Activated naive CD4-positive, alpha-beta T cell treated with anti-CD3 and anti-CD28 coated beads for 36 hours (primary cell): ENCODE measurements at regions of chr5 and their contacts with region 1.

Region 1: DNA sequence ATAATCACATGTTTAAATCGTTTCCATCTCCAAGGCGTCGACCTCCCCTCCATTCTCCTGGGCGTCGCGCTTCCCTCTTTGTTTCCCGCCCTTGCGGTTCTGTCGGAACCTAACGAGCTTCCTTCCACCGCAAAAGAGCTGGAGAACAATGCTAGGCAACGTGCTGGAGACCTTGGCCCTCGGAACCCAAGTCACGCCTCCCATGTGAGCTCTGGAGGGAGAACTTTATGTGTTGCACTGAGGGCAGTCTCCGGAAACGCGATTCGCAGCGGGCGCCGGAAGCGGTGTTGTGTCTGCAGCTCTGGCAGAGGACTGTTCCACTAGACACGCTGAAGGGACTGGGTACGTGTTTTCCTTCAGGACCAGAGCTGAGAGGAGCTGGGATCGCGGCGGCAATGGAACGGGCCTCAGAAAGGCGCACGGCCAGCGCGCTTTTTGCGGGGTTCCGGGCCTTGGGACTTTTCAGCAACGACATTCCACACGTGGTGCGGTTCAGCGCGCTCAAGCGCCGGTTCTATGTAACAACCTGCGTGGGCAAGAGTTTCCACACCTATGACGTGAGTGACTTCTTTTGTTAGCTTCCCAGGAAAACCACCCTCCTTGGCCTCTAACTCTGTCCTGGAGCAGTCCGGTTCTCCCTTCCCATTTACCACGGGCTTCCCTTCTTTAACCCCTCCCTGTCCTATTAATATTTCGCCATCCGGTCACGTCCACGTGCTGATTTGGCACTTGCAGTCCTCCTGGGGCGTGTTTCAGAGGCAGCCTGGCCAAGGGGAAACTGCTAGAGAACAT is at the start of gene WDR36:
- DNase-seq: peak; percentile 92
- H3K4me3 Mint-ChIP-seq: peak within 1 kb of the TSS; percentile 99
- H3K27ac Mint-ChIP-seq: peak within 1 kb of the TSS; percentile 90
- H3K4me1 Mint-ChIP-seq: peaks cover 42% of the 10 kb centered on the region
- H3K27me3 Mint-ChIP-seq: peaks cover 8% of the 10 kb centered on the region
- total RNA-seq, gene WDR36: 34.1 to 40.3 TPM

Region 2: DNA sequence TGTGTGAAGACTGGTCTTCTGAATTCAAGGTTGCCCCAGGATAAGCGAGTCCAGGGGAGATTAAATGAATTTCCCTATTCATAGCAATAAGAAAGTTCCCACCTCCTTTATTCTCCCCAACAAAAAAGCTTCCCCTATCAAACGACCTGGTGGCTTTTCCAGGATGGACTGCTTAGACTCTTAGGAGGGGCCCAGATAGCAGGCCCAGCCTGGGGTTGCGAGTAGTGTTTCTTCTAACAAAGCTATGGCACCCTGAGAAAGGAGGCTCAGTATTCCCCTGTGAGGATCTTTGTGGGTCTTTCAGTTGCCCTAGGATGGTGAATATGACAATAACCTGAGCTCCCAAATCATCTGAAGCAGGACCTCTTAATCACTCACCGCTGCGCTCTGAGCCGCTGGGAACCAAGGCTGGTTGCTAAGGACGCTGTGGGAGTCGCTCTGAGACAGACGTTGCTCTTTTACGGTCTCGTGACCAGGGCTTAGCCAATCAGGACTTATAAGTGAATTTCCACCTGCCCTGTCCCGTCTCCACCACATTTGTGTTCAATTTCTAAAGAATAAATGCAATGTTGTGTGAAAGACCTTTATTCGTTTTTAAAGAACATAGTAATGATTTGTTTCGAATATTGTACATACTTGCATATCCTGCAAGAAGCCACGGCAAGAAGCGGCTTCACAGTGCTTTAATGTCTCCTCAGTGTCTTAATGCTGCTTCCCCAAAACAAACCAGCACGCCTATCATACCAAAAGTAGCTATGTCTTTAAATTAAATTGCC is 365.8 kb before region 1 on chr5 and contains the start of gene TMEM232:
- CTCF ChIA-PET with region 1: no interaction called
- intact Hi-C with region 1: loop called (anchors 2 kb)
- DNase-seq: peak; percentile 90
- H3K4me3 Mint-ChIP-seq: peak within 1 kb of the TSS; percentile 75
- H3K27ac Mint-ChIP-seq: no peak within 1 kb of the TSS
- H3K4me1 Mint-ChIP-seq: peaks cover 3% of the 10 kb centered on the region
- H3K27me3 Mint-ChIP-seq: no peaks in the 10 kb centered on the region
- total RNA-seq, gene TMEM232: 0.31 to 0.86 TPM

Region 3: DNA sequence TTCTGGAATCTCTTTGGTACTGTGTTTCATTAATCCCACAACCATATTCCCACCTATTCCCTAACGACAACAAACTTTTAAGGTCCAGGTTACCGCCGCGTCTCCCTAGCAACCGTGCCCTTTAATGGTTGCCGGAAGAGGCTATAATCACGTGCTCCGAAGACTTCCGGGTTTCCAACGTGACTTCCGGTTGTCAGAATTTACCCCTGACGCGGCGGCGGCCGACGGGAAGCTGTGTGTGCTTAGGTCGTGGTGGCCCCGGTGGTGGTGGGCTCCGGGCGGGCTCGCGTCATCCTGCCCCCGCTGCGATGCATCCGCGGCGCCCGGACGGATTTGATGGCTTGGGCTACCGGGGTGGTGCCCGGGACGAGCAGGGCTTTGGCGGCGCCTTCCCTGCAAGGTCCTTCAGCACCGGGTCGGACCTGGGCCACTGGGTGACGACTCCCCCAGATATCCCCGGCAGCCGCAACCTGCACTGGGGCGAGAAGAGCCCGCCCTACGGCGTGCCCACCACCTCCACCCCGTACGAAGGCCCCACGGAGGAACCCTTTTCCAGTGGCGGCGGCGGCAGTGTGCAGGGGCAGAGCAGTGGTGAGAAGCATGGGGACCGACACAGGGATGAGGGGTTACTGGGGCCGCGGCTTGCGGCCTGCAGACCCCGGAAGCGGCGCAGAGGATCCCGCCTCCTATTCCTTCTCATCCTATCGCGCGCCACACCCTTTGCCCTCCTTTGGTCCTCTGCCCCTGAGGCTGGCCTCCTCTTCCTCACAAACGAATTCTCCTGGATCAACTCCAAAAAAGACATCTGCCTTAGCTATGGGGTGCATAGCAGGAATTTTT is 353.2 kb before region 1 on chr5 and contains the start of gene SLC25A46:
- CTCF ChIA-PET with region 1: no interaction called
- intact Hi-C with region 1: loop called (anchors 1 kb)
- DNase-seq: peak; percentile 89
- H3K4me3 Mint-ChIP-seq: peak within 1 kb of the TSS; percentile 96
- H3K27ac Mint-ChIP-seq: peak within 1 kb of the TSS; percentile 86
- H3K4me1 Mint-ChIP-seq: peaks cover 25% of the 10 kb centered on the region
- H3K27me3 Mint-ChIP-seq: peaks cover 8% of the 10 kb centered on the region
- total RNA-seq, gene SLC25A46: 26.1 to 27.2 TPM

Region 4: GRCh38 chr5:111072949-111073682 is 19.1 kb before region 1 on chr5:
- CTCF ChIA-PET with region 1: interaction called, 4 read pairs
- intact Hi-C with region 1: loop called (anchors 1 kb)
- DNase-seq: peak; percentile 71
- H3K4me3 Mint-ChIP-seq: peak overlapping the region; percentile 88
- H3K27ac Mint-ChIP-seq: no peak overlapping the region
- H3K4me1 Mint-ChIP-seq: peaks cover 30% of the 10 kb centered on the region
- H3K27me3 Mint-ChIP-seq: peaks cover 61% of the 10 kb centered on the region

Region 5: DNA sequence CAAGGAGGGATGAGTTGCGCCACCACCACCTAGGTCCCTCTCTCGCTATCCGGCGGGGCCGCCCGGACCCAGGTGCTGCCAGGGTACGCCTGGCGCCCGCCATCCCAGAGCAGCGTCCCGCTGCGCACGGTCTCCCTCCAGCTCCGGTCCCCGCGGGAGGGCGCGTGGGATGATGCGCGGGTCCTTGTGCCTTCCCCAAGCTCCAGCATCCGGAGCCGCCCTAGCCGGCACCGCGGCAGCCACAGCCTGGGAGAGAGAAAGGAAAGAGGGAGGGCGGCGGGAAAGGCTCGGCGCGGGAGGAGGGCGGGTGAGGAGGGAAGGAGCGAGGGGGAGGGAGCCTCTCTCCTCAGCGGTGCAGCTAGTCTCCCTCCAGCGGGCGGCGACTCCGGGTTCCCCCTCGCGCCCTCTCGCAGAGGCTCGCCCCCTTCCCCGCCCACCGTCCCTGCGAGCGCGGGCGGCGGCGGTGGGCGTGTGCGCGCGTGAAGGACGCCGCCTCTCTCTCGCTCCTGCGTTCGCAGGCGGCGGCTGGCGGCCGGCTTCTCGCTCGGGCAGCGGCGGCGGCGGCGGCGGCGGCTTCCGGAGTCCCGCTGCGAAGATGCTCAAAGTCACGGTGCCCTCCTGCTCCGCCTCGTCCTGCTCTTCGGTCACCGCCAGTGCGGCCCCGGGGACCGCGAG is 131.8 kb after region 1 on chr5 and contains the start of gene CAMK4:
- CTCF ChIA-PET with region 1: interaction called, 4 read pairs
- intact Hi-C with region 1: loop called (anchors 5 kb)
- DNase-seq: peak; percentile 75
- H3K4me3 Mint-ChIP-seq: peak within 1 kb of the TSS; percentile 95
- H3K27ac Mint-ChIP-seq: peak within 1 kb of the TSS; percentile 97
- H3K4me1 Mint-ChIP-seq: peaks cover 25% of the 10 kb centered on the region
- H3K27me3 Mint-ChIP-seq: no peaks in the 10 kb centered on the region
- total RNA-seq, gene CAMK4: 40.6 to 44.4 TPM

Region 6: GRCh38 chr5:111299067-111299481 is 206.8 kb after region 1 on chr5:
- CTCF ChIA-PET with region 1: no interaction called
- intact Hi-C with region 1: no loop called
- DNase-seq: no peak
- H3K4me3 Mint-ChIP-seq: no peak overlapping the region
- H3K27ac Mint-ChIP-seq: peak overlapping the region; percentile 50
- H3K4me1 Mint-ChIP-seq: peaks cover 46% of the 10 kb centered on the region
- H3K27me3 Mint-ChIP-seq: no peaks in the 10 kb centered on the region

Region 7: GRCh38 chr5:111512375-111513130 is 420.3 kb after region 1 on chr5 and contains the start of gene STARD4:
- CTCF ChIA-PET with region 1: no interaction called
- intact Hi-C with region 1: loop called (anchors 2 kb)
- DNase-seq: peak; percentile 95
- H3K4me3 Mint-ChIP-seq: peak within 1 kb of the TSS; percentile 93
- H3K27ac Mint-ChIP-seq: peak within 1 kb of the TSS; percentile 94
- H3K4me1 Mint-ChIP-seq: peaks cover 37% of the 10 kb centered on the region
- H3K27me3 Mint-ChIP-seq: no peaks in the 10 kb centered on the region
- total RNA-seq, gene STARD4: 45.0 to 47.1 TPM